Lower leg skin (tissue), 4 donors: ENCODE measurements at regions of chr11 and their contacts with region 1.

Region 1: GRCh38 chr11:93652161-93652597 is 9.3 kb upstream of the CEP295 start:
- DNase-seq: peak in 1 of 2 donors; percentile 34
- H3K4me3 ChIP-seq: no peak overlapping the region
- CTCF ChIP-seq: no peak
- POLR2A ChIP-seq: no peak

Region 2: GRCh38 chr11:93234602-93235207 is 417.5 kb before region 1 on chr11:
- intact Hi-C with region 1: loop called (anchors 5 kb)
- DNase-seq: peak; percentile 73 to 93
- H3K4me3 ChIP-seq: no peak overlapping the region
- CTCF ChIP-seq: peak in 1 of 3 donors; percentile 63
- POLR2A ChIP-seq: no peak